PC-3 (cell line): ENCODE measurements at regions of chr1 and their contacts with region 1.

Region 1: GRCh38 chr1:160083968-160084770 is 2.8 kb downstream of the KCNJ9 start:
- DNase-seq: peak; percentile 84
- ATAC-seq: peak; percentile 90
- H3K4me3 ChIP-seq: no peak overlapping the region
- H3K27ac ChIP-seq: no peak overlapping the region
- H3K4me1 ChIP-seq: peaks cover 9% of the 10 kb centered on the region
- H3K27me3 ChIP-seq: peaks cover 28% of the 10 kb centered on the region
- CTCF ChIP-seq: peak; percentile 87

Region 2: DNA sequence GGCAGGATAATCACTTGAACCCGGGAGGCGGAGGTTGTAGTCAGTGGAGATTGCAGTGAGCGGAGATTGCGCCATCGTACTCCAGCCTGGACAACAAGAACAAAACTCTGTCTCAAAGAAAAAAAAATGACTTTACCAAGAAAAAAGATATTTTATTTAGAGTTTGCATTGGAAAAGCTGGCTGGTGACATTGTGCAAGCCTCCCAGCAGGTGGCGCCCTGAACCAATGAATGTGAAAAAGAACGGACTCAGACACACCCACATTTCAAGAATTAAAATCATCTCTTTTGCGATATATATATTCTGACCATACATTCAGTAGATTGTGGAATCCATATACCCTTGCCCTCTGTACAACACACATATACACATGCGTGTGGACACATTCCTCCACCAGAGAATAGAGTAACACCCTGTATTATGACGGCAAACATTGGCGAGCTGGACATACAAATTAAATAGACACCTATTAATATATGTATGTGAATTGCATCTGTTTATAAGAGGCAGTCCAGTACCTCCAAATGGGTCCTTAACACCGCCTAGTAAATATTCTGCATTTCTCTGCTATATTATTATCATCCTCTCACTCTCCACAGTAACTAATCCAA is 951.8 kb before region 1 on chr1:
- CTCF ChIA-PET with region 1: no interaction called
- POLR2A ChIA-PET with region 1: no interaction called
- intact Hi-C with region 1: loop called (anchors 5 kb)
- DNase-seq: peak; percentile 78
- ATAC-seq: peak; percentile 64
- H3K4me3 ChIP-seq: no peak overlapping the region
- H3K27ac ChIP-seq: no peak overlapping the region
- H3K4me1 ChIP-seq: no peaks in the 10 kb centered on the region
- H3K27me3 ChIP-seq: peaks cover 84% of the 10 kb centered on the region
- CTCF ChIP-seq: peak; percentile 94

Region 3: GRCh38 chr1:159869173-159869572 is 215.0 kb before region 1 on chr1:
- CTCF ChIA-PET with region 1: no interaction called
- POLR2A ChIA-PET with region 1: no interaction called
- intact Hi-C with region 1: no loop called
- DNase-seq: peak; percentile 84
- ATAC-seq: peak; percentile 63
- H3K4me3 ChIP-seq: no peak overlapping the region
- H3K27ac ChIP-seq: peak overlapping the region; percentile 31
- H3K4me1 ChIP-seq: peaks cover 17% of the 10 kb centered on the region
- H3K27me3 ChIP-seq: no peaks in the 10 kb centered on the region
- CTCF ChIP-seq: no peak

Region 4: GRCh38 chr1:159936273-159936904 is 147.8 kb before region 1 on chr1:
- CTCF ChIA-PET with region 1: no interaction called
- POLR2A ChIA-PET with region 1: no interaction called
- intact Hi-C with region 1: loop called (anchors 5 kb)
- DNase-seq: peak; percentile 93
- ATAC-seq: peak; percentile 59
- H3K4me3 ChIP-seq: no peak overlapping the region
- H3K27ac ChIP-seq: peak overlapping the region; percentile 51
- H3K4me1 ChIP-seq: peaks cover 36% of the 10 kb centered on the region
- H3K27me3 ChIP-seq: no peaks in the 10 kb centered on the region
- CTCF ChIP-seq: peak; percentile 94

Region 5: GRCh38 chr1:160046494-160047110 is 37.6 kb before region 1 on chr1:
- CTCF ChIA-PET with region 1: interaction called, 7 read pairs
- POLR2A ChIA-PET with region 1: no interaction called
- intact Hi-C with region 1: loop called (anchors 1 kb)
- DNase-seq: peak; percentile 58
- ATAC-seq: peak; percentile 84
- H3K4me3 ChIP-seq: no peak overlapping the region
- H3K27ac ChIP-seq: no peak overlapping the region
- H3K4me1 ChIP-seq: no peaks in the 10 kb centered on the region
- H3K27me3 ChIP-seq: peaks cover 40% of the 10 kb centered on the region
- CTCF ChIP-seq: peak; percentile 90

Region 6: GRCh38 chr1:160108888-160109662 is 24.9 kb after region 1 on chr1:
- CTCF ChIA-PET with region 1: no interaction called
- POLR2A ChIA-PET with region 1: no interaction called
- intact Hi-C with region 1: no loop called
- DNase-seq: peak; percentile 73
- ATAC-seq: peak; percentile 44
- H3K4me3 ChIP-seq: no peak overlapping the region
- H3K27ac ChIP-seq: no peak overlapping the region
- H3K4me1 ChIP-seq: peaks cover 11% of the 10 kb centered on the region
- H3K27me3 ChIP-seq: no peaks in the 10 kb centered on the region
- CTCF ChIP-seq: peak; percentile 82

Region 7: GRCh38 chr1:160607011-160607671 is 523.0 kb after region 1 on chr1:
- CTCF ChIA-PET with region 1: no interaction called
- POLR2A ChIA-PET with region 1: no interaction called
- intact Hi-C with region 1: no loop called
- DNase-seq: peak; percentile 88
- ATAC-seq: peak; percentile 97
- H3K4me3 ChIP-seq: no peak overlapping the region
- H3K27ac ChIP-seq: no peak overlapping the region
- H3K4me1 ChIP-seq: no peaks in the 10 kb centered on the region
- H3K27me3 ChIP-seq: peaks cover 45% of the 10 kb centered on the region
- CTCF ChIP-seq: peak; percentile 95